ENCODE measurements at regions of chr2 and their contacts with region 1.

Region 1: GRCh38 chr2:164937864-164938401 is 17.4 kb downstream of the SLC38A11 start:
- DNase-seq: no peak
- ATAC-seq: no peak
- H3K4me3 ChIP-seq: no peak overlapping the region
- H3K4me3 Mint-ChIP-seq: peak overlapping the region; percentile 5
- H3K27ac ChIP-seq: peak overlapping the region in 1 of 2 donors; percentile 23
- H3K27ac Mint-ChIP-seq: peak overlapping the region; percentile 4
- H3K4me1 ChIP-seq: peaks cover 21 to 45% of the 10 kb centered on the region in 2 donors
- H3K4me1 Mint-ChIP-seq: peaks cover 34% of the 10 kb centered on the region
- H3K27me3 ChIP-seq: no peaks in the 10 kb centered on the region
- H3K27me3 Mint-ChIP-seq: no peaks in the 10 kb centered on the region
- CTCF ChIP-seq: no peak

Region 2: GRCh38 chr2:164952057-164952702 is 14.2 kb after region 1 on chr2:
- CTCF ChIA-PET with region 1: interaction called, 4 read pairs
- POLR2A ChIA-PET with region 1: interaction called, 6 read pairs
- intact Hi-C with region 1: loop called (anchors 2 kb)
- DNase-seq: peak; percentile 21
- ATAC-seq: peak; percentile 24
- H3K4me3 ChIP-seq: peak overlapping the region in 1 of 5 experiments; percentile 22
- H3K4me3 Mint-ChIP-seq: peak overlapping the region; percentile 41
- H3K27ac ChIP-seq: peak overlapping the region in 1 of 2 donors; percentile 2
- H3K27ac Mint-ChIP-seq: peak overlapping the region; percentile 62
- H3K4me1 ChIP-seq: peaks cover 22 to 31% of the 10 kb centered on the region in 2 donors
- H3K4me1 Mint-ChIP-seq: peaks cover 25% of the 10 kb centered on the region
- H3K27me3 ChIP-seq: no peaks in the 10 kb centered on the region
- H3K27me3 Mint-ChIP-seq: peaks cover 3% of the 10 kb centered on the region
- CTCF ChIP-seq: no peak

Region 3: DNA sequence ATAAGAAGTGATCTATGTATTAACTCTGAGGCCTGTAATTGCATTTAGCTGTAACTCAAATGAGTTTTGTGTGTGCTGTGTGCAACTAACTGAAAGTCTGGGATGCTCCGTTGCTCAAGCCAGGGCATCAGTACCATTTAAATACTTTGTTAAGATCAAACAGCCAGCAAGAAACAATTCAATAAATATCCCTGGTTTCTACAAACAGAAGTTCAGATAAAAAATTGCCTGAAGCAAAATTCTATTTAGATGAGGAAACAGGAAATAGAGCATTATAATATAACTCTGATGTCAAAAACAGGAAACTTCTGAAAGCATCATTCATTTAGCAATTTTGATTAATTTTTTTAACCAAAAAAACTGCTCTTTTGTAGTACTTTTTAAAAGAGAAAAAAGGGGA is 36.3 kb after region 1 on chr2:
- CTCF ChIA-PET with region 1: no interaction called
- POLR2A ChIA-PET with region 1: no interaction called
- intact Hi-C with region 1: loop called (anchors 5 kb)
- DNase-seq: no peak
- ATAC-seq: no peak
- H3K4me3 ChIP-seq: no peak overlapping the region
- H3K4me3 Mint-ChIP-seq: peak overlapping the region; percentile 33
- H3K27ac ChIP-seq: peak overlapping the region; percentile 21 to 79
- H3K27ac Mint-ChIP-seq: peak overlapping the region; percentile 46
- H3K4me1 ChIP-seq: peaks cover 73 to 84% of the 10 kb centered on the region in 2 donors
- H3K4me1 Mint-ChIP-seq: peaks cover 80% of the 10 kb centered on the region
- H3K27me3 ChIP-seq: no peaks in the 10 kb centered on the region
- H3K27me3 Mint-ChIP-seq: no peaks in the 10 kb centered on the region
- CTCF ChIP-seq: no peak